Prostate gland (tissue), 2 donors: ENCODE measurements at regions of chr7 and their contacts with region 1.

Region 1: DNA sequence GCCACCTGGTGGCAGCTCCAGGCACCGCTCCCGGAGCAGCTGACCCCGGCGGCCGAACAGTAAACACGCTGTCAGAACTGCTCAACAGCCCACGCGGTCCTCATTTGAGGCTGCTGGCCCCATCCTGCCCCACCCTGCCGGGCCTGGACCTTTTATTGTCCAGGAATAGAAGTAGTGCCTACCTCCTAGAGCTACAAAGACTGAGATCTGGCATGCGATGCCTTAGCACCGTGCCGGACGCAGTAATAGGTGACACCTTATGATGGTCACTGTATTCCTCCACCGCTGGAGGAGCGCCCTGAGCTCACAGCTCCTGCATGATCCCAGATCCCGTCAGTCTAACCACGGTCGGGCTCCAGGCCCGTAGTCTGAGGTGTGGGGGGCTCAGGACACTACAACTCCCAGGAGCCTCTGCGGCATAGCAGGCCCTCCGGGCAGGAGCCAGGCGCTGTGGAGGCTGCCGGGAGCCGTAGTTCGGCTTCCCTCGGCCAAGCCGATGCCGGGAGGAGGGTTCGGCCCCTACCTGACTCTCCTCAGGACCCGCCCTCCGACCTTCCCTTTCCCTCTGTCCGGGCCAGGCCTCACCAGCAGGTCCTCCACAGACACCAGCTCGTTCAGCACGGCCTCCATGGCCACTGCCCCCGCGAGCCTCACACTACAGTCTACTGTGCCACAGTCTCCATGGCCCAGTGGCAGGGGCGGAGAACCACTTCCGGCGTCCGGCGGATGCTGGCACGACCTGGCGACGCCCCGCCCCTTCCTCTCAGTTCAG is at the start of gene FIS1:
- DNase-seq: peak; percentile 92
- H3K4me3 ChIP-seq: peak within 1 kb of the TSS; percentile 54 to 78
- H3K27ac ChIP-seq: peak within 1 kb of the TSS; percentile 97
- H3K4me1 ChIP-seq: no peaks in the 10 kb centered on the region
- H3K27me3 ChIP-seq: no peaks in the 10 kb centered on the region
- CTCF ChIP-seq: peak; percentile 83 to 96 (median 90)
- POLR2A ChIP-seq: peak; percentile 54
- total RNA-seq, gene FIS1: 238 to 256 TPM

Region 2: GRCh38 chr7:101217388-101218235 is 26.9 kb before region 1 on chr7 and contains the starts of genes PLOD3 and ZNHIT1:
- intact Hi-C with region 1: loop called (anchors 2 kb)
- DNase-seq: peak; percentile 97
- H3K4me3 ChIP-seq: peak within 1 kb of the TSS; percentile 63 to 66
- H3K27ac ChIP-seq: peak within 1 kb of the TSS; percentile 71 to 78
- H3K4me1 ChIP-seq: peaks cover 8% of the 10 kb centered on the region
- H3K27me3 ChIP-seq: no peaks in the 10 kb centered on the region
- CTCF ChIP-seq: peak in 2 of 4 experiments; percentile 17 to 29
- POLR2A ChIP-seq: peak; percentile 20
- total RNA-seq, gene PLOD3: 24.2 to 52.5 TPM
- total RNA-seq, gene ZNHIT1: 75.2 to 109 TPM

Region 3: GRCh38 chr7:101308245-101309085 is 63.9 kb after region 1 on chr7:
- intact Hi-C with region 1: no loop called
- DNase-seq: peak; percentile 60
- H3K4me3 ChIP-seq: peak overlapping the region; percentile 32 to 37
- H3K27ac ChIP-seq: peak overlapping the region in 1 of 2 donors; percentile 27
- H3K4me1 ChIP-seq: no peaks in the 10 kb centered on the region
- H3K27me3 ChIP-seq: no peaks in the 10 kb centered on the region
- CTCF ChIP-seq: no peak
- POLR2A ChIP-seq: no peak